H1 (cell line): ENCODE measurements at regions of chr2 and their contacts with region 1.

Region 1: DNA sequence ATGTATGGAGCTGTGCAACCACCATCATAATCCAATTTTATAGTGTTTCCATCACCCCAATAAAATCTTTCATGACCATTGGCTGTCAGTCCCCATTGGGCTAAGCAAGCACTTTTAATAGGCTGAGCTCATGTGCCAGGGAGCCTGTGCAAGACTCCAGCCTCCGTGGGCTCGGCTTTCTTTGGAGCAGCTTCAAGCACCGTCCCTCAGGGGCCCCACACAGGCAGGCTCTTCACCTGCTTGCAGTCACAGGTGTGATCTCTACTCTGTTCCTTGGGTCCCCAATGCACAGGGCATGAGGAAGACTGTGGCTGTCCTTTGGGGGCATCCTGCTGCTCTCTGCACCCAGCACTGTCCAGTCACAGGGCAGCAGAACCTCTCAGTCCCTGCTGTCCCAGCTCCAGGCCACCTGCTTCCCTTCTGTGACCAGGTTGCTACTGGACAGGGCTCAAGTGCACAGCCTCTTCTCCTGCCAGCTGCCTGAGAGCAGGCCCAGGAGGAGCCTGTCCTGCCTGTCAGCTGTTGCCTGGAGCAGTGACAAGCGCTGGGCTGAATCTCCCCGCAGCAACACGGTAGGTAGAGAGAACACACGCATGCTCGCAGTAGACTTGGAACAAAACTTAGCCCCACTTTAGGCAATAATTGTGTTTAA is 40.7 kb upstream of the TMEM131 start:
- DNase-seq: no peak
- H3K4me3 ChIP-seq: no peak overlapping the region
- H3K27ac ChIP-seq: no peak overlapping the region
- H3K4me1 ChIP-seq: peaks cover 0 to 6% (median under 1%) of the 10 kb centered on the region in 4 experiments; a peak in 3 of 7 replicates
- H3K27me3 ChIP-seq: no peaks in the 10 kb centered on the region
- CTCF ChIP-seq: no peak
- EP300 ChIP-seq: no peak
- POLR2A ChIP-seq: no peak
- RAD21 ChIP-seq: no peak

Region 2: GRCh38 chr2:98026292-98026691 is 10.2 kb before region 1 on chr2:
- CTCF ChIA-PET with region 1: interaction called, 13 read pairs
- POLR2A ChIA-PET with region 1: no interaction called
- DNase-seq: no peak
- H3K4me3 ChIP-seq: no peak overlapping the region
- H3K27ac ChIP-seq: no peak overlapping the region
- H3K4me1 ChIP-seq: peaks cover 0 to 3% (median 0%) of the 10 kb centered on the region in 4 experiments; a peak in 1 of 7 replicates
- H3K27me3 ChIP-seq: no peaks in the 10 kb centered on the region
- CTCF ChIP-seq: no peak
- EP300 ChIP-seq: no peak
- POLR2A ChIP-seq: no peak
- RAD21 ChIP-seq: no peak

Region 3: DNA sequence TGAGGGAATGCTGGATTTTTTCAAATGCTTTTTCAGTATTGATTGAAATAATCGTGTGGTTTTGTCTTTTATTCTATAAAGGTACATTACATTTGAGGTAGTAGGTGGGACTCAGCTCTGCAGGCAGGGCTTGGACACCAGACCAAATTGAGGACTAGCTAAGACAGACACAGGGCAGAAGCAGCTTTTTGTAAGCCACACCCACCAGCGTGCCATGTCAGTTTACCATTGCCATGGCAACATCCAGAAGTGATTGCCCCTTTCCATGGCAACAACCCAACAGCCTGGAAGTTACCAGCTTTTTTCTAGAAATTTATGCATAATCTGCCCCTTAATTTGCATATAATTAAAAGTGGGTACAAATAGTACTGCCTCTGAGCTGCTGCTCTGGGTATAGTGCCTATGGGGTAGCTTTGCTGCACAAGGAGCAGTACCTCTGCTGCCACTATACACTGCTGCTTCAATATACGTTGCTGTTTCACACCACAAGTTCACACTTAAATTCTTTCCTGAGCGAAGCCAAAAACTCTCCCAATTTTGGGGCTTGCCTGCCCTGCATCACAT is 26.9 kb after region 1 on chr2:
- CTCF ChIA-PET with region 1: no interaction called
- POLR2A ChIA-PET with region 1: no interaction called
- DNase-seq: no peak
- H3K4me3 ChIP-seq: no peak overlapping the region
- H3K27ac ChIP-seq: no peak overlapping the region
- H3K4me1 ChIP-seq: no peaks in the 10 kb centered on the region
- H3K27me3 ChIP-seq: peaks cover 0 to 1% (median 0%) of the 10 kb centered on the region in 4 experiments; a peak in 1 of 7 replicates
- CTCF ChIP-seq: no peak
- EP300 ChIP-seq: no peak
- POLR2A ChIP-seq: no peak
- RAD21 ChIP-seq: no peak

Region 4: DNA sequence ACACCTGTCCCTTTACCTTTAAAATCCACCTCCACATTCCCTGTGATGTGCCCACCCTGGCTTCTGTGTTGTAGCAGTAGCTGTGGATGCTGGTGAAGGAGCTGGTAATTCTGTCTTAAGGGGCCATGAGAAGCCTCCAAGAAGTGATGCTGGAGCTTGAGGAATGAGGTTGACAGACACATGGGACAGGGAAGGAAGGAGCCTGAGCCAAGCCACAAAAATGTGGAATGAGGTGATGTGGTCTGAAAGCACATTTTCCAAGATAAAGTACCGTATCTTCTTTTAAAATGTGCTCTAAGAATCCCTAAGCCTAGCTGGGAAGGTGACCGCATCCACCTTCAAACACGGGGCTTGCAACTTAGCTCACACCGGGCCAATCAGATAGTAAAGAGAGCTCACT is 81.7 kb after region 1 on chr2:
- CTCF ChIA-PET with region 1: no interaction called
- POLR2A ChIA-PET with region 1: no interaction called
- DNase-seq: no peak
- H3K4me3 ChIP-seq: no peak overlapping the region
- H3K27ac ChIP-seq: no peak overlapping the region
- H3K4me1 ChIP-seq: no peaks in the 10 kb centered on the region
- H3K27me3 ChIP-seq: no peaks in the 10 kb centered on the region
- CTCF ChIP-seq: no peak
- EP300 ChIP-seq: no peak
- POLR2A ChIP-seq: no peak
- RAD21 ChIP-seq: no peak

Region 5: GRCh38 chr2:98157557-98157956 is 121.1 kb after region 1 on chr2:
- CTCF ChIA-PET with region 1: no interaction called
- POLR2A ChIA-PET with region 1: no interaction called
- DNase-seq: peak in 1 of 2 experiments; percentile 53
- H3K4me3 ChIP-seq: no peak overlapping the region
- H3K27ac ChIP-seq: no peak overlapping the region
- H3K4me1 ChIP-seq: no peaks in the 10 kb centered on the region
- H3K27me3 ChIP-seq: no peaks in the 10 kb centered on the region
- CTCF ChIP-seq: peak; percentile 32 to 42 (median 37)
- EP300 ChIP-seq: no peak
- POLR2A ChIP-seq: no peak
- RAD21 ChIP-seq: peak; percentile 63 to 68

Region 6: DNA sequence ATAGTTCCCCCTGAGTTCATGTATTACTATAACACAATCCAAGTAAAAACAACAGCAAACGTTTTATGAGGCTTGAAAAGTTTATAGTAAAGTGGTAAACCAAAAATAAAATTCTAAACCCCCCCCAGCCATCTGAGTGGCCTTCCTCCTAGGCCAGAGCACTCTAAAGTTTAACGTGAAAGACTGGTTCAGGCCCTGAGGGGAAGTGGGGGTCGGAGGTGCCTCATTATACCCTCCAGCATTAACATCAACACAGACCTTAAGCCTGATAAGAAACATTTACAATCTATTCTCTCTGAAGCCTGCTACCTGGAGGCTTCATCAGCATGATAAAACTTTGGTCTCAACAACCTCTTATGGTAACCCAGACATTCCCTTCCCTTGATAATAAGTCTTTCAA is 280.7 kb after region 1 on chr2:
- CTCF ChIA-PET with region 1: no interaction called
- POLR2A ChIA-PET with region 1: no interaction called
- DNase-seq: no peak
- H3K4me3 ChIP-seq: no peak overlapping the region; a peak in 1 of 8 replicates
- H3K27ac ChIP-seq: no peak overlapping the region
- H3K4me1 ChIP-seq: peaks cover 0 to 4% (median 0%) of the 10 kb centered on the region in 4 experiments; a peak in 3 of 7 replicates
- H3K27me3 ChIP-seq: no peaks in the 10 kb centered on the region
- CTCF ChIP-seq: no peak
- EP300 ChIP-seq: no peak
- POLR2A ChIP-seq: no peak
- RAD21 ChIP-seq: no peak